ENCODE measurements at regions of chr4 and their contacts with region 1.

Region 1: DNA sequence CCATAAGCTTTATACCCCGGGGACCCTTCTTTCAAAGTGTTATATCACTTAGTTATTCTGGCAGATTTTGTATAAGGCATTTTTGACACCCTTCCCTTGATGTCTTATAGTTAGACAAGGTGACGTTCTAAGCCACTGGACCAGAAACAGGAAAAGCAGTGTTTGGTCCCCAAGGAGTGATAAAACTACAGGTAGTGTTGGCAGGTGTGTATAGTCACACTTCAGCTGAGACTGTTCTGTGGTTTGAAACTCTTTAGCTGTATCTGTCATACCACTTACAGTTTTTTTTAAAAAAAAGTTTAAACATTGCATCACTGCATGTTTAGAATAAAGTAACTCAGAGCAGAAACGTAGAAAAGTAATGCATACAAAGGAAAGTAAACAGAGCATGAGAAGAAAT is 48.5 kb downstream of the TLL1 start:
- DNase-seq: peak; percentile 87
- H3K4me3 ChIP-seq: peak overlapping the region; percentile 39
- H3K27ac ChIP-seq: peak overlapping the region; percentile 71
- H3K4me1 ChIP-seq: peaks cover 42% of the 10 kb centered on the region
- CTCF ChIP-seq: no peak

Region 2: GRCh38 chr4:165873298-165874071 is 48.1 kb before region 1 on chr4:
- CTCF ChIA-PET with region 1: no interaction called
- POLR2A ChIA-PET with region 1: interaction called, 10 read pairs
- intact Hi-C with region 1: no loop called
- DNase-seq: no peak
- H3K4me3 ChIP-seq: no peak overlapping the region
- H3K27ac ChIP-seq: no peak overlapping the region
- H3K4me1 ChIP-seq: no peaks in the 10 kb centered on the region
- CTCF ChIP-seq: no peak

Region 3: GRCh38 chr4:165931741-165932140 is 10.2 kb after region 1 on chr4:
- CTCF ChIA-PET with region 1: interaction called, 3 read pairs
- POLR2A ChIA-PET with region 1: interaction called, 27 read pairs
- intact Hi-C with region 1: no loop called
- DNase-seq: no peak
- H3K4me3 ChIP-seq: no peak overlapping the region
- H3K27ac ChIP-seq: no peak overlapping the region
- H3K4me1 ChIP-seq: no peaks in the 10 kb centered on the region
- CTCF ChIP-seq: no peak

Measured in OCI-LY7 (cell line).